ENCODE measurements at regions of chr2 and their contacts with region 1.

Region 1: DNA sequence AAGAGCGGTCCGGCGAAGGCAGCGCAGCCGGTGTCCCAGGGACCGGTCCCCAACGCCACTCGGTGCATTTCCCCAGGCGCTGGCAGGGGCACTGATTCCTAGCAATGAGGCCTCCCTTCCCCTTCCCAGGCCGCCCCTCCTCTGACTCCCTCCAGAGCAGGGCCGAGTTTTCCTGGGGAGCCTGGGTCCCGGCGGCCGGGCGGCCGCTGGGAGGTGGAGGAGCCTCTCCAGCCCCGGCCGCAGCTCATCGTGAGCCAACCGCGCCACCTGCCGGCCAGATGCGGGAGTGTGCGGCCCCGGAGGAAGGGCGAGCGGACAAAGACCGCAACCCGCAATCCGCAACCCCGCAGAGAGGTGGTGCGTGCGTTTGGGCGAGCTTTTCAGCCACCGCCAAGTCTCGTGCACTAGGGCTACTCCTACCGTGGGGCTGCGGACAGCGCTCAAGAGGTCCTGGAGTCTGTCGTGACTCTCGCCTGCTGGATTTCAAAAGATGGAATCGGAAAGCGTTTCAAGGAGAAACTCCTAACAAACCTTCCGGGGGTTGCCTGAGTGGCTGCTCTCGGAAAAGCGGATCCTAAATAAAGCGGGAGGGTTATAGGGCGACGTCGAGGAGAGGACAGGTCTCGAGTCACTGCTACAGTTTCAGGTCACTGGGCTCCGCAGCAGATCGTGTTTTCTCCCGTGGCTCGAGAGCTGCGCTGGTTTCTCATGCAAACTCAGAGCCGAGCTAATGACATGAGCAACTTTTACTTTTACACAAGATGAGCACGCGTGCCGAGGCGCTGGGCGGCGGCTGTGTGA is 1.5 kb upstream of the EPHA4 start:
- DNase-seq: peak; percentile 82
- H3K4me3 ChIP-seq: peak overlapping the region; percentile 45 to 68 (median 67)
- H3K27ac ChIP-seq: peak overlapping the region; percentile 14
- H3K4me1 ChIP-seq: peaks cover 10% of the 10 kb centered on the region
- H3K27me3 ChIP-seq: peaks cover 3 to 8% of the 10 kb centered on the region in 2 experiments
- CTCF ChIP-seq: peak; percentile 96 to 97
- POLR2A ChIP-seq: no peak

Region 2: DNA sequence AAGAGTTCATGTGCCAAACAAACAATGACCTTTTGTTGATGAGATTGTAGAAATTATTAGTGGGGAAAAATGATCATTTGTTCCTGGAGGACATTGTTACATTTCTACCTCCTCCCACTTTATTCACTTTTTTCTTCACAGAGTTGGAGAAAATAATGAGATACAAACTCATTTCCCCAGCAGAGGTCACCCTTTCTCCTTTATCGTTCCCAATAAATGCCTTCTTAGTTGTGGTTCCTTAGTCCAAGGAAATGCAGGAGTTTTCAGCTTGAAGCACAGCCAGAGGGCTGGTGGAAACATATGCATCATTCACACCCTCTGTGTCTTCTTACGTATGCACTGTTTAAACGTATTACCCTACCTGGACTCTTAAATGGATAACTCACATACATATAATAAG is 1837.4 kb before region 1 on chr2:
- CTCF ChIA-PET with region 1: interaction called, 87 read pairs
- POLR2A ChIA-PET with region 1: no interaction called
- dilution Hi-C with region 1: no loop called
- intact Hi-C with region 1: no loop called
- DNase-seq: peak; percentile 67
- H3K4me3 ChIP-seq: no peak overlapping the region
- H3K27ac ChIP-seq: no peak overlapping the region
- H3K4me1 ChIP-seq: no peaks in the 10 kb centered on the region
- H3K27me3 ChIP-seq: no peaks in the 10 kb centered on the region
- CTCF ChIP-seq: peak; percentile 18 to 26
- POLR2A ChIP-seq: no peak

Region 3: GRCh38 chr2:221104361-221104811 is 469.2 kb before region 1 on chr2:
- CTCF ChIA-PET with region 1: interaction called, 4 read pairs
- POLR2A ChIA-PET with region 1: no interaction called
- dilution Hi-C with region 1: no loop called
- intact Hi-C with region 1: loop called (anchors 2 kb)
- DNase-seq: peak; percentile 69
- H3K4me3 ChIP-seq: no peak overlapping the region
- H3K27ac ChIP-seq: no peak overlapping the region
- H3K4me1 ChIP-seq: peaks cover 11% of the 10 kb centered on the region
- H3K27me3 ChIP-seq: no peaks in the 10 kb centered on the region
- CTCF ChIP-seq: peak in 1 of 2 donors; percentile 26
- POLR2A ChIP-seq: no peak

Region 4: DNA sequence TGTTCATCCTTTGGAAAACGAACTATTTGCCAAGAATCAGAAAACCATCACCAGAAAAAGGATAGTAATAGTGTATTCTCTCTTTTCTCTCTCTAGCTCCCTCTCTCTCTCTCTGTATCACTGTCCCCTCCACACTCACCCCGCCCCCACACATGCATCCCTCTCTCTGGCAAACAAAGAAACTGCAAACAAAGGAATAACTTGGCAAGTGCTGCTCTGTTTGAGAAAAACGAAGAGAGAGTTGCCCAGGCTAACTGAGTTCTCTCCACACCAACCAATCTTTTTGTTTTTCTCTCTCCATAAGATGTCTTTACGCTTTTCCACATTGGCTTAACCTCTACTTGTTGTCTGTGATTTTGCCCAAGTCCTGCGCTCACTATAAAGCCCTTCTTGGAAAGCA is 317.8 kb before region 1 on chr2:
- CTCF ChIA-PET with region 1: no interaction called
- POLR2A ChIA-PET with region 1: no interaction called
- dilution Hi-C with region 1: no loop called
- intact Hi-C with region 1: no loop called
- DNase-seq: peak; percentile 23
- H3K4me3 ChIP-seq: no peak overlapping the region
- H3K27ac ChIP-seq: no peak overlapping the region
- H3K4me1 ChIP-seq: no peaks in the 10 kb centered on the region
- H3K27me3 ChIP-seq: no peaks in the 10 kb centered on the region
- CTCF ChIP-seq: no peak
- POLR2A ChIP-seq: no peak

Region 5: DNA sequence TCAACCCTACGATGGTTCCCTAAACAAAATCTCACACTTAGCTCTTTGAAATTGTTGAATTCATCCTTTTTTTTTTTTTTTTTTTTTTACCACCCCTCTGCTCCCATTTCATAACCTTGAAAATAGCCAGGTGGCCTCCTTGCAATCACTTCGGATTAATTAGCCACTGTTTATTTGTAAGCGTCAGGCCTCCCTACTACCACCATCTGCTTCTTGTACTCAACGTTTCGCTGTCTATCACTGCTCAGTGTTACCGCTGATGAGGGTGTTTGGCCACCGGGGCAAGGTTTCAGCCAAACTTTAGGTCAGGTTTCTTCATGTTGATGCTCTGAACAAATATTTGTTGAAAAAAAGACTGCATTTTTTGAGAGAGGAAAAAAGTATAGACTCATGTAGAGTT is 184.7 kb before region 1 on chr2:
- CTCF ChIA-PET with region 1: no interaction called
- POLR2A ChIA-PET with region 1: no interaction called
- dilution Hi-C with region 1: no loop called
- intact Hi-C with region 1: loop called (anchors 5 kb)
- DNase-seq: no peak
- H3K4me3 ChIP-seq: no peak overlapping the region
- H3K27ac ChIP-seq: no peak overlapping the region
- H3K4me1 ChIP-seq: no peaks in the 10 kb centered on the region
- H3K27me3 ChIP-seq: no peaks in the 10 kb centered on the region
- CTCF ChIP-seq: no peak
- POLR2A ChIP-seq: no peak

Region 6: DNA sequence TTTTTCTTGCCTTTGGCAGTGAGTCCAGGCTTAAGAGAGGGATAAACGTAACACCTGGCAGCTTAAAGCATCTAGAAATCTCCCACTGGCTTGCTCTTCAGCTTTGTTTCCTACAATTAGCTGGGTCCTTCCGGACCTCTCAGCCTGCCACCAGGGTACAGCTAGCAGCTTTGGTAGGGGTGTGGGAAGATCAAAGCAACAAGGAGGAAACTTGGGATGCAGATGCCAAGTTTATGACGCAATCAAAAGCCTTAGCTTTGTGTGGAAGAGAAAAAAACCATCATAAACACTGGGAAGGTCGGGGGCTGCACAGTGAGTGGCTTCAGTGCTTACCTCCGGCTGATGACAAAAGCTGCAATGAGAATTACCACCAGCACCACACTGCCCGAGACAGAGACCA is 118.4 kb before region 1 on chr2:
- CTCF ChIA-PET with region 1: no interaction called
- POLR2A ChIA-PET with region 1: no interaction called
- dilution Hi-C with region 1: no loop called
- intact Hi-C with region 1: no loop called
- DNase-seq: no peak
- H3K4me3 ChIP-seq: no peak overlapping the region
- H3K27ac ChIP-seq: no peak overlapping the region
- H3K4me1 ChIP-seq: no peaks in the 10 kb centered on the region
- H3K27me3 ChIP-seq: no peaks in the 10 kb centered on the region
- CTCF ChIP-seq: no peak
- POLR2A ChIP-seq: no peak

Region 7: DNA sequence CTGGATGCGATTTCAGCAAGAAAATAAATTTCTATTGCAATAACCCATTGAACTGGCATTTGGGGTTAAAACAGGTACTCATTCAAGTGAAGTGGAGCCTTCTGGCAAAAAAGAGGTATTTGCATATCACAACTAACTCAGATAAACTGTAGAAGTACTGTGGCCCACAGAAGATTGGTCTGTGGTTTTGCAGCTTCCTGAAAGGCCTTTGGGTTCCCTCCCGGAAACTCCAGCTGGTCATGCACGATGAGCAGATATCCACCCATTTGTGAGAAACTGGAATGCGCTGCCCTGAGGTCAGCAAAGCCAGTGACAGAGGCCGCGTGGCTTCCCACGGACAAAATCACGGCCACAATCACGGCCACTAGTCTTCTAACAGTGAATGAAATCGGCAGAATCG is 107.9 kb before region 1 on chr2:
- CTCF ChIA-PET with region 1: interaction called, 6 read pairs
- POLR2A ChIA-PET with region 1: no interaction called
- dilution Hi-C with region 1: no loop called
- intact Hi-C with region 1: loop called (anchors 1 kb)
- DNase-seq: no peak
- H3K4me3 ChIP-seq: no peak overlapping the region
- H3K27ac ChIP-seq: no peak overlapping the region
- H3K4me1 ChIP-seq: peaks cover 20% of the 10 kb centered on the region
- H3K27me3 ChIP-seq: no peaks in the 10 kb centered on the region
- CTCF ChIP-seq: no peak
- POLR2A ChIP-seq: no peak

Region 8: GRCh38 chr2:221517696-221518151 is 55.9 kb before region 1 on chr2:
- CTCF ChIA-PET with region 1: interaction called, 10 read pairs
- POLR2A ChIA-PET with region 1: no interaction called
- dilution Hi-C with region 1: no loop called
- intact Hi-C with region 1: loop called (anchors 1 kb)
- DNase-seq: peak; percentile 72
- H3K4me3 ChIP-seq: no peak overlapping the region
- H3K27ac ChIP-seq: peak overlapping the region; percentile 70
- H3K4me1 ChIP-seq: peaks cover 33% of the 10 kb centered on the region
- H3K27me3 ChIP-seq: no peaks in the 10 kb centered on the region
- CTCF ChIP-seq: no peak
- POLR2A ChIP-seq: no peak

Region 9: DNA sequence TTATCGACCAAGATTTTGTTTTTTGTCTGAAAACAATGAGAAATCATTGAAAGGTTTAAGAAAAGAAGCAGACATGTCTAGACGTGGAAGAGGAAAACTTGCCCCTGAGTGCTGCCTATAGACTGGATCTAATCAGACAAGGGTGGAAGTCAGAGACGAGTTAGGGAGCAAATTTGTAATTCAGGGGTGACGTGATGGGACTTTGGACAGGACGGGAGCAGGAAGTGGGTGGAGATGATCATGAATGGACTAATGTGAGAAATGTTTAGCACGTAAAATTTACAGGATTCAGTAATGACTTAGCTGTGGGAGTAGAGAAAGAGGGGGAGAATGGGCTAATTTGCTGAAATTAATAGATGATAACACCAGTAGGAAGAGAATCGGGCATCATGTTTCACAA is 115.5 kb after region 1 on chr2:
- CTCF ChIA-PET with region 1: no interaction called
- POLR2A ChIA-PET with region 1: no interaction called
- dilution Hi-C with region 1: no loop called
- intact Hi-C with region 1: no loop called
- DNase-seq: no peak
- H3K4me3 ChIP-seq: no peak overlapping the region
- H3K27ac ChIP-seq: no peak overlapping the region
- H3K4me1 ChIP-seq: no peaks in the 10 kb centered on the region
- H3K27me3 ChIP-seq: no peaks in the 10 kb centered on the region
- CTCF ChIP-seq: no peak
- POLR2A ChIP-seq: no peak

Region 10: GRCh38 chr2:221779614-221780067 is 206.0 kb after region 1 on chr2:
- CTCF ChIA-PET with region 1: interaction called, 7 read pairs
- POLR2A ChIA-PET with region 1: no interaction called
- dilution Hi-C with region 1: no loop called
- intact Hi-C with region 1: loop called (anchors 2 kb)
- DNase-seq: peak; percentile 91
- H3K4me3 ChIP-seq: no peak overlapping the region
- H3K27ac ChIP-seq: peak overlapping the region; percentile 86
- H3K4me1 ChIP-seq: peaks cover 23% of the 10 kb centered on the region
- H3K27me3 ChIP-seq: no peaks in the 10 kb centered on the region
- CTCF ChIP-seq: no peak
- POLR2A ChIP-seq: no peak

Region 11: DNA sequence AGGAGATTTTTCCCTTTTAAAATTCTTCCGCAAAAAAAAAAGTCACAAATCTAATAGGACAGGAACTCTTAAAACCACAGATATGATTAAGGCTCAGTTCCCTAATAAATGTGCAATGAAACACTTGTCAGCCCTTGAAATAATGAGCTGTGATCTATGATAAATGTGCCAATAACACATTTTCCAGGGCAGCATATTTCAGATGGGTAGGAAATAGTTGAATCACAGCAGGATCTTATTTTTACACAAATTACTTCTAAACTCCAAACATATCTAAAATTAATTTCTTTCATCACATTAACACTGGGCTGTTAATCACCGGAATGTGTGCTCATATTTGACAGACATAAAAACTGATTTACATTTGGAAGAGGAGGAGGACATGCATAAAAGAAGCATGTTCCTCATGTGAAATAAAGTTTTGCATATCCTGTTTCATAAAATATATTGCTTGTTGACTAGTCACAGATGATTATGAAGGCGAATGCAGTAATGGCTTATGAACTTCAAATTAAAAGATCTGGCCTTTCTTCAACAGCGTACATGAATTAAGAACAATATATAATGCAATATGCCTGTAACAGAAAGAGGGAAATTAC is 443.7 kb after region 1 on chr2:
- CTCF ChIA-PET with region 1: no interaction called
- POLR2A ChIA-PET with region 1: no interaction called
- dilution Hi-C with region 1: no loop called
- intact Hi-C with region 1: no loop called
- DNase-seq: no peak
- H3K4me3 ChIP-seq: no peak overlapping the region
- H3K27ac ChIP-seq: no peak overlapping the region
- H3K4me1 ChIP-seq: no peaks in the 10 kb centered on the region
- H3K27me3 ChIP-seq: no peaks in the 10 kb centered on the region
- CTCF ChIP-seq: no peak
- POLR2A ChIP-seq: no peak

Measured in endothelial cell of umbilical vein (primary cell).